MCF 10A (cell line): ENCODE measurements at regions of chr4 and their contacts with region 1.

Region 1: DNA sequence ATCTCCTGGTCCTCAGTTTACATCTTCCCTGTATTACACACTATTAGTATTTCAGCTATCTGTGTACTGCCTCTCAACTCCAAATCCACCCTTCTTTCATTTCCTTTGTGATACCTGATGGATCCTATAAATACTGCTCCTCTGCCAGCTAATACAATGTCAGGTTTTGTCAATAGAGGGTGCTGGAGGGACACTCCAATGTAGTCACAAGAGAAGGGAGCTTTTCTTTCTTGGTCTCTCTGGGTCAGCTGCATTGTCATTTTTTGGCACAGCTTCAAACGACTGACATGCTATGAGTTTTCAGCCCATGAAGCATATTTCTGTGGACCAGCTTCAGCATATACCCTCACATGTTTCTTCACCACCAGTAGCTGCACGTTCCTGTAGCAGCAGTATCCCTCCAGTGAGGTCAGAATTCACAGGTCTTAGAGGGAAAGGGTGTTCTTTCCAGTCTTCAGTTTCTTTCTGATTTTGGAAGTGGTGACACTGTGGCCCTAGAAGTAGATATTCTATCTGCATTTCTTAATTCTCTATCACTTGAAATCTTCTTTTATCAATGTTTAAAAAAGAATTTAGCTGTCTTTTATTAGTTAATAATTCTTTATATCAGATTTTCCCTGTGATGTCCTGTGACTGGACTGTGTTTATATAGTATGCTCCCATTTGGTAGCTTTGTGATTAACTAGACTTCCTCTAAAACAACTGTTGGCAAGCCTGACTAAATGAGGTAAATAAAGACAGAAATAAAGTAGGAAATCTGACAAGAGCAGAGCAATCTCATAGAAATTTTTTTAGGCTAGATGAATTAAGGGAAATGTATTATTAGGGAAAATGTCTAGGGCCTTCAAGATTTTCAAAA is 60.6 kb downstream of the GABRA2 start:
- DNase-seq: peak; percentile 80
- H3K4me3 Mint-ChIP-seq: no peak overlapping the region
- H3K27ac Mint-ChIP-seq: no peak overlapping the region
- H3K4me1 Mint-ChIP-seq: peaks cover 5% of the 10 kb centered on the region
- H3K27me3 Mint-ChIP-seq: no peaks in the 10 kb centered on the region
- CTCF ChIP-seq: peak; percentile 65

Region 2: DNA sequence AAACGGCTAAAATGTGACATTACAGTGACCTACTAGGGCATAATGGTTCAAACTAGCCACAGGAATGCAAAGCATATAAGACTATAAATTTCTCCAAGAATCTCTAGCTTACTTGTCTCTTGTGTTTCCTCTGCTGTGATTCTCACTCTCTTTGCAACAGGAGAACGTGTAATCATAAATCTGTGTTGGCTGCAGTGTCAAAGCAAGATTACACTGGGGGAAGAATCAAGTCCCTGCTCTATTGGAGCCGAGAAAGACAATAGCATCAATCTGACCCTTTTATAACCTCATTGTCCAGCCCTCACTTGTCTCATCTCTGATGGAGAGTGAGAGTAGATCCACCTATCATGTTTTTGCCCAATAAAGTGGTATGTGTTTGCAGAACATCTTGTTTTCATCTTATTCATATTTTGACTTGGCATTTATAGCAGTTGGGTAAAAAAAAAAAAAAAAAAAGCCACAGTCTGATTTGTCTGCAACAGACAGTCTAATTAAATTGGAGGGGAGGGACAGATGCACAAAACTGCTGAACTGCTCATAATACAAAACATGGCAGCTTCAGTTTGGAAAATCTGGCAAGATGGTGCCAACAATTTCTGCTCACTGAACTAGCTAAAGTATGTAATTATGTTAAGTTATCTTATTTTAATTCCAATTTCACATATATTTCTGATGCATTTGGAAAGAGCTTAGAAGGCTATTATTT is 225.6 kb after region 1 on chr4:
- CTCF ChIA-PET with region 1: interaction called, 9 read pairs
- POLR2A ChIA-PET with region 1: no interaction called
- intact Hi-C with region 1: loop called (anchors 1 kb)
- DNase-seq: no peak
- H3K4me3 Mint-ChIP-seq: no peak overlapping the region
- H3K27ac Mint-ChIP-seq: no peak overlapping the region
- H3K4me1 Mint-ChIP-seq: no peaks in the 10 kb centered on the region
- H3K27me3 Mint-ChIP-seq: no peaks in the 10 kb centered on the region
- CTCF ChIP-seq: no peak

Region 3: DNA sequence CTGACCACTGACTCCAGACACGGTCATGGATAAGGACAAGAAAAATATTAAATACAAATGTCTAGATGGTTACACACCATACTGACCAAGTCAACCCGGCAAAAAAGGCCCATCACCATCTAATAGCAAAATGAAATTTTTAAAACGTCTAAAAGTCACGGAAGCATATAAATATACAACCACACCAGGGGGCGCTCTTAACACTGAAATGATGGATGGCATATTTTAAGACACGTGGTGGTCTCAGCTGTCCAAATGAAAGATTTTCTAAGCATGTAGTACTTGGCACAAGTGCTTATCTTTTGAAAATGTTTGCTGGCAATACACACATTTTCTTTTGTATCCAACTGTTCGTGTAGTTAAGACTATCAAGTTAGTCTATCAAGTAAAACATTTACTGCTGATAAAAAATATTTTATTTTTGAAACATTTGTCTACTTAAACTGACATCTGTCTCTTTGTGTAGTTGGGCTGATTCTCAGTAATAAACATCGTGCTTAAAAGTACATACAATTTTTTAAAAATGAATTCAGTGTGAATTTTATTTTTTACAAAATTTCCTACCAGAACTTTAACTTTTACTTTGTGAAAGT is 515.1 kb after region 1 on chr4:
- CTCF ChIA-PET with region 1: interaction called, 5 read pairs
- POLR2A ChIA-PET with region 1: no interaction called
- intact Hi-C with region 1: loop called (anchors 5 kb)
- DNase-seq: peak; percentile 70
- H3K4me3 Mint-ChIP-seq: no peak overlapping the region
- H3K27ac Mint-ChIP-seq: no peak overlapping the region
- H3K4me1 Mint-ChIP-seq: no peaks in the 10 kb centered on the region
- H3K27me3 Mint-ChIP-seq: no peaks in the 10 kb centered on the region
- CTCF ChIP-seq: peak; percentile 52

Region 4: DNA sequence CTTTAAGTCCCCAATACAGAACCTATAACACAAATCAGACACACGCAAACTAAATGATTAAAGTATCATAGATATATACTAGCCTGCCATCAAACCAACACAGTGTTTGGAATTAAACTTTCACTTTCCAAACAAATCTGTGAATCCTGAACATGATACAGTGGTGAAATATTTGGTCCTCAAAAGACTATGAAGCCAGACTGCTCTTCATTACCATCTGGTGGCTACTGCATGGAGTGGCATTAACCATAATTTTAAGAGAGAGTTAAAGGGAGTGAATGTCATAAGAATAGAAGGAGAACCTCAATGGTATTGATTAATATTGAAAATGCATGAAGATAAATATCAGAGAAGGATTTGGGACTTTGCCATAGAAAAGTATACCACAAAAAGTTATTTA is 673.2 kb after region 1 on chr4:
- CTCF ChIA-PET with region 1: interaction called, 5 read pairs
- POLR2A ChIA-PET with region 1: no interaction called
- intact Hi-C with region 1: loop called (anchors 5 kb)
- DNase-seq: peak; percentile 25
- H3K4me3 Mint-ChIP-seq: no peak overlapping the region
- H3K27ac Mint-ChIP-seq: no peak overlapping the region
- H3K4me1 Mint-ChIP-seq: no peaks in the 10 kb centered on the region
- H3K27me3 Mint-ChIP-seq: no peaks in the 10 kb centered on the region
- CTCF ChIP-seq: peak; percentile 19

Region 5: GRCh38 chr4:47383829-47384427 is 1054.6 kb after region 1 on chr4:
- CTCF ChIA-PET with region 1: interaction called, 5 read pairs
- POLR2A ChIA-PET with region 1: no interaction called
- intact Hi-C with region 1: loop called (anchors 5 kb)
- DNase-seq: peak; percentile 45
- H3K4me3 Mint-ChIP-seq: no peak overlapping the region
- H3K27ac Mint-ChIP-seq: no peak overlapping the region
- H3K4me1 Mint-ChIP-seq: no peaks in the 10 kb centered on the region
- H3K27me3 Mint-ChIP-seq: peaks cover 39% of the 10 kb centered on the region
- CTCF ChIP-seq: peak; percentile 48